T-cell (primary cell): ENCODE measurements at regions of chr2 and their contacts with region 1.

Region 1: DNA sequence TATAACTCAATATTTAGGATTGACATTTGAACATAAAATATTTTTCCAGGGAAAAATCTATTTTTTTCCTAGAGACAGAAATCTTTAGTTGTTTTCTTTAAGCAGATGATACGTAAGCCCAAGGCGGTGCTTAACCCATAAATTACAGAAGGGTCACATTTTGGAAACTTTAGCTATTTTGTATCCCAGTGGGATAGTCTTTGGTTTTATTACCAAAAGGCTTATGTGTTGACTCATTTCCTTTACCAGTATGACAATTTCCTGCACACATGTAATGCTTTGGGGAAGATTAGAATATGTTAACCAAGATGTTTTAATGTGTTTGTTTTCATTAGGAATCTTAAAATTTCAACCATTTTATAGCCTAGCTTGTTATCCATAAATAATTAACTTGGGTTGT is 24.8 kb downstream of the DYNC1I2 start:
- DNase-seq: no peak
- ATAC-seq: no peak
- H3K4me3 ChIP-seq: no peak overlapping the region
- H3K4me3 Mint-ChIP-seq: no peak overlapping the region
- H3K27ac ChIP-seq: no peak overlapping the region
- H3K27ac Mint-ChIP-seq: no peak overlapping the region
- H3K4me1 ChIP-seq: no peaks in the 10 kb centered on the region
- H3K4me1 Mint-ChIP-seq: peaks cover 0 to 4% (median 1%) of the 10 kb centered on the region in 3 donors
- H3K27me3 ChIP-seq: no peaks in the 10 kb centered on the region
- H3K27me3 Mint-ChIP-seq: no peaks in the 10 kb centered on the region

Region 2: GRCh38 chr2:170340693-170341068 is 1371.4 kb before region 1 on chr2:
- CTCF ChIA-PET with region 1: no interaction called
- POLR2A ChIA-PET with region 1: interaction called in 1 of 2 experiments, 14 read pairs
- DNase-seq: no peak
- ATAC-seq: no peak
- H3K4me3 ChIP-seq: no peak overlapping the region
- H3K4me3 Mint-ChIP-seq: no peak overlapping the region
- H3K27ac ChIP-seq: no peak overlapping the region
- H3K27ac Mint-ChIP-seq: no peak overlapping the region
- H3K4me1 ChIP-seq: peaks cover 0 to 21% of the 10 kb centered on the region in 2 experiments
- H3K4me1 Mint-ChIP-seq: peaks cover 6% of the 10 kb centered on the region in 3 donors
- H3K27me3 ChIP-seq: no peaks in the 10 kb centered on the region
- H3K27me3 Mint-ChIP-seq: peaks cover 4 to 6% of the 10 kb centered on the region in 2 donors

Region 3: DNA sequence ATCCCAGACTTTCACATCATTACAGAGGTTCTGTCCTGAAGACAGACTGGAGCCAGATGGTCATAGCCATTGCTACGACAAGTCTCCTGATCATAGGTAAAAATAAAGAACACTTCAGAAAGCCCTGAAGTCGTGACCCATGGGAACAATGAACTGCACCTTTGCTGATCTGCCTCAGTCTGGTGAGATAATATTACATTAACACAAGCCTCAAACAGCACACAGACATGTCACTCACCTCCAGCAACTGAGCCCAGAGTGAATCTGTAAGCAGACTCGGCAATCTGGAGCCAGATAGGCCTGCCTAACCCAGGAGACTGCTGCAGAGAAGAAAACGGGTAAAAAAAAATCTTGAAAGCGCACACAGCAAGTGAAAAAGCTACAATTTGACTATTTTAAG is 102.8 kb after region 1 on chr2:
- CTCF ChIA-PET with region 1: interaction called, 4 to 12 read pairs
- POLR2A ChIA-PET with region 1: no interaction called
- DNase-seq: no peak
- ATAC-seq: no peak
- H3K4me3 ChIP-seq: no peak overlapping the region
- H3K4me3 Mint-ChIP-seq: no peak overlapping the region
- H3K27ac ChIP-seq: no peak overlapping the region
- H3K27ac Mint-ChIP-seq: no peak overlapping the region
- H3K4me1 ChIP-seq: no peaks in the 10 kb centered on the region
- H3K4me1 Mint-ChIP-seq: no peaks in the 10 kb centered on the region
- H3K27me3 ChIP-seq: no peaks in the 10 kb centered on the region
- H3K27me3 Mint-ChIP-seq: no peaks in the 10 kb centered on the region